Psoas muscle (tissue), 8 donors: ENCODE measurements at regions of chr1 and their contacts with region 1.

Region 1: DNA sequence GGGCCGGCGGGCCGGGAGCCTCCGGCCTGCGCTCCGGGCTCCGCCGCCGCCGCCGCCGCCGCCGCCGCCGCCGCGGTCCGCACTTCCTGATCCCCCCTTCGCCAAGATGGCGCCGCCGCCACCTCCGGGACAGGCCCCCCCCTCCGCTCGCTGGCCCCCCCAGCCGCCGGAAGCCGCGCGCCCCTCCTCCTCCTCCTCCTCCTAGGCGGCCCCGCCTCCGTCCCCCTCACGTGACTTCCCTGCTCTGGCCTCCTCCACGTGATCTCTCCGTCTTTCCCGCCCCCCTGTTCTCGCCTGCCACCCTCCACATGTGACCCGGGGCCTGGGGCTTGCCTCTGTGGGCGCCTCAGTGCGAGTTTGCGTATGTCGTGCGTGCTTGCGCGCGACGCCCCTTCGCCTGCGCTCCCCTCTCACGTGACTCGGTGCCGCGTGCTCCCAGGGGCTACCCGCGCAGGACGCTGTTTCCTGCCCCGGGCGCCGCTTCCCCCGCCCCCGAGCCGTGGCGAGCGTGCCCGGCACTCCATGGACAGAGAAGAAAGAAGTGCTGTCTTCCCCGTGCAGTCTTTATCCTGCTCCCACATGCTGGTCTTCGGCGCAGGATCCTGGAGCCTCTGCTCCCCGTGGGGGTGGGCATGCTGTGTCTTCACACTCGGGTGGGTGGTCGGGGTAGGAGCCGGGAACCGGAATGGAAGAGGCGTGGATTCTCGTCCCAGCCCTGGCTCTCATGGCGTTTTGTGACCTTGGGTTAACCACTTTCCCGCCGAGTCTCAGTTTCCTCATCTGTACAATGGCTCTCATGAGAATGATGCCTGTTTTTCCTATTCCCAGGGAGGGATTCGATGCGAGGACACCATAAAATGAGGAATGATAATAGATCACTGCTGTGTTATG is at the start of gene UBE2Q1:
- DNase-seq: peak; percentile 99 to 100
- ATAC-seq: peak; percentile 95 to 97 (median 96)
- H3K4me3 ChIP-seq: peak within 1 kb of the TSS; percentile 91
- H3K27ac ChIP-seq: peak within 1 kb of the TSS; percentile 97
- H3K4me1 ChIP-seq: peaks cover 35% of the 10 kb centered on the region
- H3K27me3 ChIP-seq: no peaks in the 10 kb centered on the region
- CTCF ChIP-seq: no peak
- total RNA-seq, gene UBE2Q1: 43.1 to 65.5 (median 54.8) TPM

Region 2: GRCh38 chr1:154669464-154670282 is 110.9 kb after region 1 on chr1:
- intact Hi-C with region 1: loop called in 1 of 2 experiments (anchors 10 kb)
- DNase-seq: peak; percentile 66 to 84
- ATAC-seq: peak; percentile 98 to 100 (median 100)
- H3K4me3 ChIP-seq: no peak overlapping the region
- H3K27ac ChIP-seq: no peak overlapping the region
- H3K4me1 ChIP-seq: no peaks in the 10 kb centered on the region
- H3K27me3 ChIP-seq: no peaks in the 10 kb centered on the region
- CTCF ChIP-seq: peak; percentile 86

Region 3: DNA sequence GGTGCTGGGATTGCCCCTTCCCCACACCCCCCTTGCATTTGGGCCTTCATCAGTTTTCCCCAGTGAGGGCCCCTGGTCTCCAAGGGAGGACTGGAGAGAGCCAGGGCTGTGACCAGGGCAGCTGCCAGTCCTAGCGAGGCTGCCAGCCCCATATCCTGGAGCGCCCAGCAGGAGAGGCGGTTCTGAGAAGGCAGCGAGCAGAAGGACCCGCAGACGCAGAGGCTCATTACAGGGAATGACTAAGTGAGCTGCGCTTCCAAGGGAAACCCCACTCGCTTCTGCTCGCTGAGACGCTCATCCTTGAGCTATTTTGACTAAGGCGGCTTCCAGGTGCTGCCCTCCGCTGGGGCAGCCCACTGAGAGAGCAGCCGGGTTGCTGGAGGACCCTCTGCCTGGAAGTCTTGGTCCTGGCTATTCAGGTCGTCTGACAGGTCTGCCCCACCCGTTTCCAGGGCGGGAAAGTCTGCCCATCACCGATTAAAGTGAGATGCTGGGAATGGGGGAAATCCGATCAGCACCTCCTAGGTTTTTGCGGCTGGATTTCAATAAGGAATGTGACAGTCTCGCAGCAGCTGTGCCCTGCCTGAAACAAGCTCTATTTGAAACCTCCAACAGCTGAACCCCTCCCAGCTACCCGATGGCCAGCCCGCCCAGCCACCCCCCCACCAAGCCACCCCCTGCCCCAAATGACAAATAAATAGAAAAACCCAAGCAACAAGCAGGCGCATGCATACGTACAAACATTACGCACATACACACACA is 308.4 kb after region 1 on chr1:
- intact Hi-C with region 1: loop called in 1 of 2 experiments (anchors 5 kb)
- DNase-seq: peak; percentile 67 to 87
- ATAC-seq: peak; percentile 54 to 69 (median 68)
- H3K4me3 ChIP-seq: peak overlapping the region; percentile 91
- H3K27ac ChIP-seq: peak overlapping the region; percentile 96
- H3K4me1 ChIP-seq: peaks cover 44% of the 10 kb centered on the region
- H3K27me3 ChIP-seq: no peaks in the 10 kb centered on the region
- CTCF ChIP-seq: no peak

Region 4: GRCh38 chr1:154884869-154885701 is 326.3 kb after region 1 on chr1:
- intact Hi-C with region 1: no loop called
- DNase-seq: no peak
- ATAC-seq: no peak
- H3K4me3 ChIP-seq: no peak overlapping the region
- H3K27ac ChIP-seq: no peak overlapping the region
- H3K4me1 ChIP-seq: no peaks in the 10 kb centered on the region
- H3K27me3 ChIP-seq: no peaks in the 10 kb centered on the region
- CTCF ChIP-seq: no peak

Region 5: DNA sequence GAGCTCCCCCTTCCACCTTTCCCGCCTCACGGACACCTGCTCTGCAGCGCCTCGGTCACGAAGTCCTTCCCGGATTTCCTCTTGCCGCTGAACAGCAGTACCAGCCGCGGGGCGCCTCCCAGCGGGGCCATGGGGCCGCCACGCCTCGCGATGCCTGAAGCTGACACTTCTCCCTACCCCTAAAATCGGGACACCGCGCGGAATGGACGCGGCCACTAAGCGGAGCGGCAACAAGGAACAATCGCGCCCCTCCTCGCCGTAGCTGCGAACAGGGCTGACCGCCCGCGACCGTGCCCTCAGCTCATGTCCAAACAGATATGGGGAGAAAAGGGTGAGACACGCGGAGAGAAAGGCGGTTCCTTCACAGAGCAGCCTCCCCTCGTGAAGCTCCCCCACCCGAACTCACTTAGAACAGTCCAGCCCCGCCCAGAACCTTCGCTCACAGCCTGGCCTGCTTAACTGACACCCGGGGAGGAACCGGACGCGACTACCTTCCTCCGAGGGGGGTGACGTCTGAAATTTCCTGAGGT is 377.8 kb after region 1 on chr1 and contains the start of gene PMVK:
- intact Hi-C with region 1: loop called in 1 of 2 experiments (anchors 10 kb)
- DNase-seq: peak; percentile 95 to 97
- ATAC-seq: peak; percentile 90 to 94 (median 93)
- H3K4me3 ChIP-seq: peak within 1 kb of the TSS; percentile 76
- H3K27ac ChIP-seq: peak within 1 kb of the TSS; percentile 95
- H3K4me1 ChIP-seq: peaks cover 4% of the 10 kb centered on the region
- H3K27me3 ChIP-seq: no peaks in the 10 kb centered on the region
- CTCF ChIP-seq: peak; percentile 19
- total RNA-seq, gene PMVK: 17.0 to 30.5 (median 22.3) TPM